Tibial artery (tissue), 4 donors: ENCODE measurements at regions of chr5 and their contacts with region 1.

Region 1: DNA sequence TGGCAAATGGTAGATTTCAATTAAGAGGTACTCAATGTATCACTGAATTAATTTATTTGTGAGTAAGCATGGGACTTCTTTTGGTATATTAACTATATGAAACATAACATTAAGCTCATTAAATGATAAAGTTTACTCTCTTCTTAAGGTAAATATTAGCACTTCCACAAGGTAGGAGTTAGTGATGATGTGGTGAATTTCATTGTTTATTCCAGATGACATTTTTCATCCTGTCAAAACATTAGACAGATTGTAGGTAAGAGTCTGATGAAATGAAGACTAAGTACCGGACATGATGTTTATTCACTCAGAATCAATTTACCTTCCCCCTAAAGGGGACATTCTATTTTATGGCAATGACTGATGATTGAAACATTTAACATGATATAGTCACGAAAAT is 949.0 kb downstream of the DNAH5 start:
- DNase-seq: no peak
- H3K4me3 ChIP-seq: no peak overlapping the region
- H3K27ac ChIP-seq: no peak overlapping the region
- H3K4me1 ChIP-seq: no peaks in the 10 kb centered on the region
- H3K27me3 ChIP-seq: no peaks in the 10 kb centered on the region
- CTCF ChIP-seq: no peak

Region 2: DNA sequence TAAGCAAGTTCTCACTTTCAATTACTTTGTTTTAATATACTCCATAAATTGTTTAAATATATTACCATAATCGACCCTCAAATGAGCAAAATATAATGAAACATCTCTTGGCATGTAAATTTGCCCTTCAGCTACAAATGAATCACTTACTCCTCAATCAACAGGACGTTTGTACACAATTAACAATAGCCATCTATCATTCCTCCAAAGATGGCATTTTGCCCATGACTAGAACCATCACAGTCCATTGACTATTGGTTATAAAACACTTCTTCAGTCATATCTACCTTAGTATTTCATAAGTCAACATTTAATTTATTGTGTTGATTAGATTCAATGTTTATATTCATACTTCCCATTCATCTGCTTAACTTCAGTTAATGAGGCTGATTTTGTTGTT is 1218.4 kb before region 1 on chr5:
- intact Hi-C with region 1: loop called (anchors 5 kb)
- DNase-seq: no peak
- H3K4me3 ChIP-seq: no peak overlapping the region
- H3K27ac ChIP-seq: no peak overlapping the region
- H3K4me1 ChIP-seq: no peaks in the 10 kb centered on the region
- H3K27me3 ChIP-seq: no peaks in the 10 kb centered on the region
- CTCF ChIP-seq: no peak